ENCODE measurements at regions of chr5 and their contacts with region 1.

Region 1: GRCh38 chr5:136080483-136081216 is 51.9 kb downstream of the TGFBI start:
- DNase-seq: peak; percentile 90

Region 2: GRCh38 chr5:135944967-135945560 is 135.6 kb before region 1 on chr5:
- intact Hi-C with region 1: loop called (anchors 2 kb)
- DNase-seq: no peak

Region 3: DNA sequence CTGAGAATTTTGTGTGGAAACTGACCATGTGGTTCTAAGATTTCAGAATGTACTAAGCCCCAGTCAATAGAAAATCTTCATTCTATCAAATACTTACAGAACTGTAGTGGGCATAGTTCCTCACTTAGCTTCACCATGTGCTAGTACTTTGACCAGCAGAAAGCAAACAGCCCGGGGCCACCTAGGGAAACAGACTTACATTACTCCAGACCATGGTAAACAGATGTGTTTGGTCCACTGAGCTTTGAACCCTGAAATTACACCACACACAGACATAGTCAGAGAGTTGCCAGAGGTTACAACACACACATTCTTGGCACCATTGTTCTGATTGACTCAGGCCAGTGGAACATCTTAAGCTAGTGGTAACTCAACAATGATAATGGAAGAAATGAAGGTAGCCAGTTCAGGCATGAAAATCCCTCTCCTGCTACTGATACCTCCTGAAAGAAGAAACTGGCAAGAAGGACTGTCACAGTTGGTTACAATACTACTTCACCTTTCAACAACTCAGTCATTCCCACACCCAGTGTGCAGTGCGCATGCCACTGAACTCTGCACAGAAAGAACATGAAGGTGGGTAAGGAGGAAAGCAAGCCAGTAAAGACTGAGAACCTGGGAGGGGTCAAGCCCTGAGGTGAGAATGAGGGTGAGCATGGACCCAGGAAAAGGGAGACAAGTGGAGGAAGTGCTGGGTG is 107.2 kb before region 1 on chr5:
- intact Hi-C with region 1: loop called (anchors 5 kb)
- DNase-seq: no peak

Region 4: GRCh38 chr5:136037001-136037705 is 43.5 kb before region 1 on chr5:
- intact Hi-C with region 1: loop called (anchors 10 kb)
- DNase-seq: no peak

Region 5: GRCh38 chr5:136132557-136133221 is 52.0 kb after region 1 on chr5 and contains the start of gene SMAD5:
- intact Hi-C with region 1: loop called (anchors 2 kb)
- DNase-seq: peak; percentile 98
- total RNA-seq, gene SMAD5: 45.9 TPM

Measured in cardiac septum (tissue), 1 donor.